ENCODE measurements at regions of chr6 and their contacts with region 1.

Region 1: DNA sequence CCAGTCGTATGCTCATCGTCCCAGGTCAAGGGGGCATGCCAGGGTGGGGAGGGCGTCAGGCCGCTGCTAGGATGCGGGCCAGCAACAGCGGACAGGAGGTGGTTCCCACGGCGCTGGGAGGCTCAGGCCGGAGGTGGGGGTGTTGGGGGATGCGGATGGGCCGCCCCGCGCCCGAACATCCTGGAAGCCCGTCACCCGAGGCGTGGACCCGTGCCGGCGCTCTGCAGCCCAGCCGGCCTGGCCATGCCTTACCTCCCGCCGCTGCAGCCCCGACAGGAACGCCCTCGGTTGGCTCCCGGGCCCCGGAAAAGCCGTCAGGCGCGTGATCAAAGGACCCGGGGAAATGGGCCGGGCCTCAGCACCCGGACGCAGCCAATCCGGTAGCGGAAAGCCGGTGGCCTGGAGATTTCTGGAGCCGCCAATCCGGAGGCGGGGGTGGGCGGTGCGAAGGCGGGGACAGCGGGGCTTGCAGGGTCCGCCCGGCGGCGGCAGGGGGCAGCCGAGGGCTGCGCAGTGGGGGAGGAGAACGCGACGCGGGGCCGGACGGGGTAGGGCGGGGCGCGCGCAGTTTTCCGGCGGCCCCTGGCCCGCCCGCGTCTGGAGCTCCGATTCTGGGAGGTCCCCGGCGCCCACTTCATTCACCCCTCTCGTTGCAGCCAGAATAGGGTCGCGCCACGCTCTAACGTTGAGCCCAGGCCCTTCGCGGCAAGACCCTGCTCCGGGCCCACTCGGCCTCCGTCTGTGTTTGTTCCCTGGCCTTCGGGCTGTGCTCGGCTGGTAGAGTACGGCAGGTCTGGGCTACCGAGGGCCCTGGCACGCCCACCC is at the start of gene SMIM29:
- DNase-seq: peak; percentile 99
- ATAC-seq: peak; percentile 89
- H3K4me3 Mint-ChIP-seq: peak within 1 kb of the TSS; percentile 98
- H3K27ac Mint-ChIP-seq: peak within 1 kb of the TSS; percentile 97
- H3K4me1 Mint-ChIP-seq: peaks cover 27% of the 10 kb centered on the region
- H3K27me3 Mint-ChIP-seq: peaks cover 7% of the 10 kb centered on the region
- total RNA-seq, gene SMIM29: 24.4 to 28.3 TPM

Region 2: GRCh38 chr6:34170346-34170745 is 78.6 kb before region 1 on chr6:
- POLR2A ChIA-PET with region 1: no interaction called
- DNase-seq: no peak
- ATAC-seq: no peak
- H3K4me3 Mint-ChIP-seq: no peak overlapping the region
- H3K27ac Mint-ChIP-seq: no peak overlapping the region
- H3K4me1 Mint-ChIP-seq: peaks cover 2% of the 10 kb centered on the region
- H3K27me3 Mint-ChIP-seq: peaks cover 18% of the 10 kb centered on the region

Region 3: DNA sequence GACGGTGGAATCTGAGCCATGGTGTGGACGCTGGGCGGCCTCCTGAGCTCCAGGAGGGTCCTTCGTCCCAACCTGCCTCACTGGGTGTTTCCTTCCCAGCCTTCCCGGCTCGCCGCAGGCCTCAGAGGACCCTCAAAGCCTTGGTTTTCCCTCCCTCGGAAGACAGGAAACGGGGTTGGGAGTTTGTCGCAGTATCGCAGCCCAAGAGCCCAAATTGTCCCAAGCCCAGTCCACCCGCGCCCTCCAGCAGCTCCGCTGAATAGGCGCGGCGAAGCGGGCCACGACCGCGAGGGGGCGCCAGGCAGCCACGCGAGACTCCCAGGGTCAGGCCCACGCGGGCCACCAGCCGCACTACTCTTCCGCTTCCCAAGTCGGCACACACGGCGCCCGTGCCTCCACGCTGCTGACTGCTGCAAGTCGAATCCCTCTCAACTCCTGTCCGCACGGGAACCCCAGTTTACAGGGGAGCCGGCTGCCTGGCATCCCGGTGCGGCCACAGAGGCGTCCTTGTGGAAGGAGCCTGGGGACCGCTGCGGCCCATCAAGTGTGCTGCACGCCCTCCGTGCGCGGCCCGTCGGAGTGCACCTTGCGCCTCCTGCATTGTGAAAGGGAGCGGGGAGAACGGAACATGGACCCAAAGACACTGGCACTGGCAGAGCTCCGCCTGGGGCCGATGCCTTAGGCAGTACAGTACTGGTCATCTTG is 52.7 kb before region 1 on chr6:
- POLR2A ChIA-PET with region 1: interaction called, 19 read pairs
- DNase-seq: peak; percentile 95
- ATAC-seq: peak; percentile 99
- H3K4me3 Mint-ChIP-seq: peak overlapping the region; percentile 85
- H3K27ac Mint-ChIP-seq: peak overlapping the region; percentile 56
- H3K4me1 Mint-ChIP-seq: peaks cover 3% of the 10 kb centered on the region
- H3K27me3 Mint-ChIP-seq: peaks cover 19% of the 10 kb centered on the region

Region 4: DNA sequence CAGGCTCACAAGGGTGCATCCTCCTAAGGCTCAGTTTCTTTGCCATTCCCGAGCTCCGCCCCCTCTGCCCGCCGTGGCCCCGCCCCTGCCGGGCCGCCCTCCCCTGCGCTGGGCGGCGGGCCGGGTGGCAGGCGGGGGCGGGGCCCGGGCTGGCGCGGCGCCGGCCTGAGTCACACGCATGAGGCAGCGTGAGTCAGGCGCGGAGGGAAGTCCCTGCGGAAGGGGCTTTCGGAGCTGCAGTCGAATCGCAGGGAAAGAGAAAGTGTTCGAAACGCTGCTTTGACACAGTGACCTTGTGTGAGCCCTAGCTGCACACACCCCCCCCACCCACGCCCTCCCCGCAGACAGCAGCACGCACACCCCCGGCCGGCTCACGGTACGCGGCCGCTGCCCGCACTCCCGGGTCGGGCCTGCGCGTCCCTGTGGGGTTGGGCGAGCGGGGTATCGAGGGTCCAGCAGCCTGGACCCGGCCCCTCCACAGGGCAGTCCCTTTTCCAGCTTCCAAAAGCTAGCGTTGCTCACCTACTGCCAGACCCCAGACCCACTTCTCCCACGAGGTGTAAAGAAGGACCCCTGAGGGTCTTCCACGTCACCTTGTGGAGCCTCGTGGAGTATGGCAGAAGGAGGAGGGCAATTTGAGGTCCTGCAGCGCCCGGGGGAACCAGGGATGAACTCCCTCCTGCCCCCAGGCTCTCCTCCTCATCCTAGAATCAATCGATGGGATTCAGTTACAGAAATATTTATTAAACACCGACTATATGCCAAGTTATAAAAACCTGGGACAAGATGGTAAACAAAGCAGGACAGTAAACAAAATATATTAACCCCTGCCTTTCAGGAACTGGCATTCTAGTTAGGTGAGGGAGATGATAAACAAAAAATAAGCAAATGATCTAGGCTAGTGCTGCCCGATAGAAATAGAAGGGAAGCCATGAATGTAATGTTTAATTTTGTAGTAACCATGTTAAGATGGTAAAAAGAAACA is 24.7 kb before region 1 on chr6:
- POLR2A ChIA-PET with region 1: interaction called, 11 read pairs
- DNase-seq: peak; percentile 95
- ATAC-seq: peak; percentile 97
- H3K4me3 Mint-ChIP-seq: peak overlapping the region; percentile 73
- H3K27ac Mint-ChIP-seq: peak overlapping the region; percentile 86
- H3K4me1 Mint-ChIP-seq: peaks cover 18% of the 10 kb centered on the region
- H3K27me3 Mint-ChIP-seq: no peaks in the 10 kb centered on the region

Region 5: DNA sequence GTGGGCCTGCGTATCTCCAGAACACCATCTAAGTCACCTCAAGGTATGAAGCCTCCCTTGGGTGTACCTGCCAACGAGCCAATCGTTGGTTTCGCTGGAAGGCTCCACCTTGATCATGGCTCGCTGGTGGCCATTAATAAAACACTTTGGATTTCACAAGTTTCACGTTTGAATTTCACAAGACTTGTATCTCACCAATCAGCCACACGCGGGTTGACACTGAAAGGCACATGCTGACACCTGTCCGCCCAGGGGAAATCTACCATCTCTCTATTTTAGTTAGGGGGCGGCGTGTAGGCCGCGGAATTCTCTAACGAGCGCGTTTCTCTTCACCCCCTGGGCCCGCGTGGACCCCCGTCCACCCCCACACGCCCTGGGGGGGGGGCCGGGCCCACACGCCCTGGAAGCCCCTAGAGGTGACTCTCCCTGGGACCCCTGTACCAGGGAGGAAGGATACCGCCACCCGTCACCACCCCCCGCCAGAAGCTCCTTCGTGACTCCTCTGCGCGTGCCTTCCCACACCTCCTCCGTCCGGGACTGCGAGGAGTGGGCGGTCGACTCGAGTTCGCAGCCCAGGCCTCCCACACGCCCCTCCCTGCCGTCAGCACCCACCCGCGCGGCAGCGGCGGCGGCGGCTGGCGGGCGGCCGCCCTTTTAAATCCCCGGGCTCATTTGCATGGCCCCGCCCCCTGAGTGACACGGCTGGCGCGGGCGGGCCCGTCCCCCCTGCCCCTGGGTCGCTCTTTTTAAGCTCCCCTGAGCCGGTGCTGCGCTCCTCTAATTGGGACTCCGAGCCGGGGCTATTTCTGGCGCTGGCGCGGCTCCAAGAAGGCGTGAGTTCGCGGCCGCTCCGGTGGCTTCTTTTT is 12.6 kb before region 1 on chr6 and contains the start of gene HMGA1:
- POLR2A ChIA-PET with region 1: interaction called, 42 read pairs
- DNase-seq: peak; percentile 90
- ATAC-seq: peak; percentile 59
- H3K4me3 Mint-ChIP-seq: peak within 1 kb of the TSS; percentile 93
- H3K27ac Mint-ChIP-seq: peak within 1 kb of the TSS; percentile 98
- H3K4me1 Mint-ChIP-seq: peaks cover 29% of the 10 kb centered on the region
- H3K27me3 Mint-ChIP-seq: no peaks in the 10 kb centered on the region
- total RNA-seq, gene HMGA1: 233 to 247 TPM

Region 6: GRCh38 chr6:34273242-34273805 is 24.4 kb after region 1 on chr6:
- POLR2A ChIA-PET with region 1: interaction called, 12 read pairs
- DNase-seq: no peak
- ATAC-seq: no peak
- H3K4me3 Mint-ChIP-seq: no peak overlapping the region
- H3K27ac Mint-ChIP-seq: no peak overlapping the region
- H3K4me1 Mint-ChIP-seq: peaks cover 14% of the 10 kb centered on the region
- H3K27me3 Mint-ChIP-seq: no peaks in the 10 kb centered on the region

Region 7: GRCh38 chr6:34374069-34374468 is 125.1 kb after region 1 on chr6:
- POLR2A ChIA-PET with region 1: no interaction called
- DNase-seq: no peak
- ATAC-seq: no peak
- H3K4me3 Mint-ChIP-seq: no peak overlapping the region
- H3K27ac Mint-ChIP-seq: no peak overlapping the region
- H3K4me1 Mint-ChIP-seq: peaks cover 8% of the 10 kb centered on the region
- H3K27me3 Mint-ChIP-seq: no peaks in the 10 kb centered on the region

Region 8: GRCh38 chr6:34392497-34393190 is 143.7 kb after region 1 on chr6 and contains the start of gene NUDT3:
- POLR2A ChIA-PET with region 1: interaction called, 28 read pairs
- DNase-seq: peak; percentile 97
- ATAC-seq: peak; percentile 92
- H3K4me3 Mint-ChIP-seq: peak within 1 kb of the TSS; percentile 71
- H3K27ac Mint-ChIP-seq: peak within 1 kb of the TSS; percentile 86
- H3K4me1 Mint-ChIP-seq: peaks cover 4% of the 10 kb centered on the region
- H3K27me3 Mint-ChIP-seq: no peaks in the 10 kb centered on the region
- total RNA-seq, gene NUDT3: 17.7 to 18.7 TPM

Region 9: DNA sequence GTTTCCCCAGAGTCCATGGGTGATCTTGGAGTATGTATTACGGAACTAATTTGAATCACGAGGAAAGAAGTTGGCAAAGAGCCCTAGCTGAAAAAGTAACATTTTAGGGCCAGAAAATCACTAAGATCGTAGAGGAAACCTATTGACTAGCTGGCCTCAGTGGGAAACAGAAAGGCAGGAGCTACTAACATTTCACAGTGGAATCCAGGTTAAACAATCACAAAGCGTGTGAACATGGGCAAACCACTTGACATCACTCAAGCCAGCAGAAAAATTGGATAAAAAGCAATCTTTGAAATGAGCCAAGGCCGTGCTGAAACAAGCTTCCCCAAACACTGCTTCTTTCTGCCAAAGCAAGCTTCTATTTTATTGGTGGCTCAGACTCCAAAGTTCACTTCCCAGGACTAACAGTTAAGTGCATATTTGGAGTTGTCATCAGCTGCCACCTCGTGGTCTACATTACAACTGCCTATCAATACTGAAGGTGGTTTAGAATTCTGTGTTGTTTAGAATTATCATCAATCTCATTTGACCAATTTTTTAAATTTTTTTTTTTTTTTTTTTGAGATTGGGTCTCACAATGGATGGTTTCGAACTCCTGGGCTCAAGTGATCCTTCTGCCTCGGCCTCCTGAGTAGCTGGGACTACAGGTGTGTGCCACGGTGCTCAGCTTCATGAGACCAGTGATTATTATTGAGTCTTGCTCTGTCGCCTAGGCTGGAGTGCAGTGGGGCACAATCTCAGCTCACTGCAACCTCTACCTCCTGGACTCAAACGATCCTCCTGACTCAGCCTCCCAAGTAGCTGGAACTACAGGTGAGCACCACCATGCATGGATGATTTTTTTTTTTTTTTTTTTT is 166.3 kb after region 1 on chr6:
- POLR2A ChIA-PET with region 1: interaction called, 34 read pairs
- DNase-seq: no peak
- ATAC-seq: peak; percentile 75
- H3K4me3 Mint-ChIP-seq: no peak overlapping the region
- H3K27ac Mint-ChIP-seq: peak overlapping the region; percentile 38
- H3K4me1 Mint-ChIP-seq: peaks cover 6% of the 10 kb centered on the region
- H3K27me3 Mint-ChIP-seq: no peaks in the 10 kb centered on the region